Heart right ventricle (tissue), 16 donors: ENCODE measurements at regions of chr3 and their contacts with region 1.

Region 1: GRCh38 chr3:13748276-13748879 is 131.5 kb downstream of the WNT7A start:
- DNase-seq: no peak
- ATAC-seq: no peak
- H3K4me3 ChIP-seq: no peak overlapping the region
- H3K27ac ChIP-seq: no peak overlapping the region
- H3K4me1 ChIP-seq: no peaks in the 10 kb centered on the region
- H3K27me3 ChIP-seq: peaks cover 0 to 22% (median 6%) of the 10 kb centered on the region in 7 donors
- CTCF ChIP-seq: no peak

Region 2: DNA sequence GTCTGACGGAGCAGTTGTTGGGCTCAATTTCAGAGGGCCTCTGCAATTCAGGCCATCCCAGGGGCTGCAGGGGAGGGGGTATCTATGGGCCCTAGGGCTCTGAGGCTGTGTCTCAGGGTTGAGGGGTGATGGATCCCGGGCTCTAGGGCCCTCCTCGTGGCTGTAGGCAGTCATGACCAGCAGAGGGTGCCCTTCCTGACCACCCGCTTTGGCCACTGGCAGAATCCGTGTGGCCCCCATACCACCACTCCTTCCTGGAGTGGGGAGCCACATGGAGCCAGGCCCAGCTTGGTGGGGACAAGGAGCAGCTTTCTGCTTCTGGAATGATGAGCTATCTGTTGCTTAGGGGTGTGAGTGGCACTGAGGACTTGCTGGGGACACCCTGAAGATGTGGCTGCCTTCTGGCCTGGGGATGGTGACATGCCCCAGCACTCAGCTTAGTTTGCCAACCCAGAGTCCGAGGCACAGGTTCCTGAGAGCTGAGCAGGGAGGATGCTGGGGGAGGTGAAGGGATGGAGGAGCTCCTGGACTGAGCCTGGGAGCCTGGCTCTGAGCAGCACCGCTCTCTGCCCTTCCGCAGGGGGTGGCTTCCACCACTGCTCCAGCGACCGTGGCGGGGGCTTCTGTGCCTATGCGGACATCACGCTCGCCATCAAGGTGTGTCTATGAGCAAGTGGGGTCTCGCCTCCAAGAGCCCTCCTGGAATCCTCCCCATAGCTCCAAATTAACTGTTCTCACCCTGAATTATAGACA is 248.1 kb before region 1 on chr3:
- intact Hi-C with region 1: no loop called
- DNase-seq: no peak
- ATAC-seq: peak in 1 of 8 donors; percentile 12
- H3K4me3 ChIP-seq: no peak overlapping the region
- H3K27ac ChIP-seq: no peak overlapping the region
- H3K4me1 ChIP-seq: peaks cover 3 to 17% (median 9%) of the 10 kb centered on the region in 9 donors
- H3K27me3 ChIP-seq: no peaks in the 10 kb centered on the region
- CTCF ChIP-seq: peak in 8 of 9 donors; percentile 28 to 60 (median 55)

Region 3: GRCh38 chr3:13776268-13777050 is 28.1 kb after region 1 on chr3:
- intact Hi-C with region 1: loop called in 1 of 10 experiments (anchors 2 kb)
- DNase-seq: no peak
- ATAC-seq: no peak
- H3K4me3 ChIP-seq: no peak overlapping the region
- H3K27ac ChIP-seq: no peak overlapping the region
- H3K4me1 ChIP-seq: no peaks in the 10 kb centered on the region
- H3K27me3 ChIP-seq: peaks cover 4 to 50% (median 30%) of the 10 kb centered on the region in 7 donors
- CTCF ChIP-seq: no peak